AG04449 (cell line): ENCODE measurements at regions of chr15 and their contacts with region 1.

Region 1: DNA sequence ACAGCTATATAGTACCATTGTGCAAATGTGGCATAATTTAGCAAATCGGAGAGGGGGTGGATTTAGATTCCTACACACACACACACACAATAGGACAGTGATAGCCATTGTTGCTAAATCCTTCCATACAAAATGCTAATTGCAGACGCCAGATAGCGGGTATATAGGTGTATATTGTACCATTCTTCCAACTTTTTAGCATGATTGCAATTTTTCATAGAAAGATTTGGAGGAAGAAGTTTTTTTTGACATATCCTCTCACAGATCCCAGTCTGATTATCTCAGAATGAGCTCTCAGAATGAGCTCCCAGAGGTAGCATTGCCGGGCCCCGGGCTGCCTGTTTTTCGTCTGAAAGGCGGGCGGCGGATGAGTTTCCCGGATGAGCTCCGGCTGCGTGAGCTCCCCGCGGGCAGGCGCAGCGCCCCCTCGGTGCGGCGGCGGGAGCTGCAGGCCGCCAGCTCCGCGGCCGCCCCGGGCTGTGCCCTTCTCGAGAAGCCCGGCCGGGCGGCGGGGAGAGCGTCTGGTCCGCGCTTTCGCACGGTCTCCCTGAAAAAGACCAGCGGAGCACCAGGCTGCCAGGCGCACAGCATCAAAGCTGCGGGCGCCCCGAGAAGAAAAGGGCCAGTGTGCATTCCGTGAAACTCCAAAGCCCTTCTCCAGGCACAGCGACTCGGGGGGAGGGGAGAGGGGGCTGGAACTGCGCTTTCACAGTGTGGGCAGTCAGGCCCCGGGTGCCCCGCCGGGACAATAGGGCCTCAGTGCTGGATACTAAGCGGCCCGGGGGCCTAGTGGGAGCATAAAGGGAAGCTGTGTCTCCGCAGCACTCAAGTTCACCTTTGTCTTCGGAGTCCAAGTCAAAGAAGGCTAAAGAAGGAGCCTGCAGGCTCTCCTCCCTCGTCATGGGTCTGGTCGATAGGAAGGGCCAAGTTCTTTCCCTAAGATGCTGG is 12.0 kb upstream of the SHC4 start:
- DNase-seq: no peak
- H3K4me3 ChIP-seq: peak overlapping the region; percentile 57
- CTCF ChIP-seq: peak; percentile 78

Region 2: DNA sequence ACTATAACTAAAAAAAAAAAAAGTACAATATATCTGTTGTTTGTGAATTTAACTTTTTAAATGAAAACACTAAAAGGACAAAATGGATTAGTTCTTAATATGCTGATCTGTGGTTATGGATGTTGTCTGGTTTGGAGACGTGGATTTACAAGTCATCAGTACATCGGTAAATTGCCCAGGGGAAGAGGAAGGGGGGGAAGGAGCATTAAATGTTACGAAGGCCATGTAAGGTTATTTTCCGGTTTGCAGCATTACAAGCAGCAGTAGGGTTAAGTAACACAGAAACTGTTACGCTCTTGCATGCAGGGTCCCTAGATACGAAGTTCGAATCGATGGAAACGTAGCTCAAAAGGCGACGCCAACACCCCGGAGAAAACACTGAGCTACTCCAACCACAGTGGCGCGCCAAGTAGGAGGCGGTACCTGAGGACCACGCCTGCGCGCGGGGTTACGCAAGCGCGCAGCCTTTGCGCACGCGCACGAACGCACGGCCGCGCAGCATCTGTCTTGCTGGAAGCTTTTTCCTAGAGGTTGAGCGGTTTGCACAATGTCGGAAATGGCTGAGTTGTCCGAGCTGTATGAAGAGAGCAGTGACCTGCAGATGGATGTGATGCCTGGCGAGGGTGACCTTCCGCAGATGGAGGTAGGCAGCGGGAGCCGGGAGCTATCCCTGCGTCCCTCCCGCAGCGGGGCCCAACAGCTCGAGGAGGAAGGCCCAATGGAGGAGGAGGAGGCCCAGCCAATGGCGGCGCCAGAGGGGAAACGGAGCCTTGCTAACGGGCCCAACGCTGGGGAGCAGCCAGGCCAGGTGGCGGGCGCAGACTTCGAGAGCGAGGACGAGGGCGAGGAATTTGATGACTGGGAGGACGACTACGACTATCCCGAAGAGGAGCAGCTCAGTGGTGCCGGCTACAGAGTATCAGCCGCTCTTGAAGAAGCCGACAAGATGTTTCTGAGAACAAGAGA is 97.8 kb before region 1 on chr15 and contains the start of gene EID1:
- CTCF ChIA-PET with region 1: interaction called, 26 read pairs
- POLR2A ChIA-PET with region 1: interaction called, 5 read pairs
- DNase-seq: peak; percentile 68
- H3K4me3 ChIP-seq: peak within 1 kb of the TSS; percentile 87
- CTCF ChIP-seq: peak; percentile 24

Region 3: DNA sequence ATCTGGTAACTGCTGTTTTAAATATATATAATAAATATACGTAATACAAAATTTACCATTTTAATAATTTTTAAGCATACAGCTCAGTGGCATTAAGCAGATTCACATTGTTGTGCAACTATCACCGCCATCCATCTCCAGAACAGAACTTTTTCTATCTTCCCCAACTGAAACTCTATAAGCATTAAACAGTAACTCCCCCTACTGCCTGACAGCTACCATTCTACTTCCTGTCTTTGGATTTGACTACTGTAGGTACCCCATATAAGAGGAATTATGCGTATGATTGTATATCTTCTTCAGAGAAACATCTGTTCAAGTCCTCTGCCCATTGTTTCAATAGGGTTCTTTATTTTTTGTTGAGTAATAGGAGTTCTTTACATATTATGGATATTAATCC is 61.0 kb before region 1 on chr15:
- CTCF ChIA-PET with region 1: no interaction called
- POLR2A ChIA-PET with region 1: no interaction called
- DNase-seq: no peak
- H3K4me3 ChIP-seq: no peak overlapping the region
- CTCF ChIP-seq: no peak

Region 4: DNA sequence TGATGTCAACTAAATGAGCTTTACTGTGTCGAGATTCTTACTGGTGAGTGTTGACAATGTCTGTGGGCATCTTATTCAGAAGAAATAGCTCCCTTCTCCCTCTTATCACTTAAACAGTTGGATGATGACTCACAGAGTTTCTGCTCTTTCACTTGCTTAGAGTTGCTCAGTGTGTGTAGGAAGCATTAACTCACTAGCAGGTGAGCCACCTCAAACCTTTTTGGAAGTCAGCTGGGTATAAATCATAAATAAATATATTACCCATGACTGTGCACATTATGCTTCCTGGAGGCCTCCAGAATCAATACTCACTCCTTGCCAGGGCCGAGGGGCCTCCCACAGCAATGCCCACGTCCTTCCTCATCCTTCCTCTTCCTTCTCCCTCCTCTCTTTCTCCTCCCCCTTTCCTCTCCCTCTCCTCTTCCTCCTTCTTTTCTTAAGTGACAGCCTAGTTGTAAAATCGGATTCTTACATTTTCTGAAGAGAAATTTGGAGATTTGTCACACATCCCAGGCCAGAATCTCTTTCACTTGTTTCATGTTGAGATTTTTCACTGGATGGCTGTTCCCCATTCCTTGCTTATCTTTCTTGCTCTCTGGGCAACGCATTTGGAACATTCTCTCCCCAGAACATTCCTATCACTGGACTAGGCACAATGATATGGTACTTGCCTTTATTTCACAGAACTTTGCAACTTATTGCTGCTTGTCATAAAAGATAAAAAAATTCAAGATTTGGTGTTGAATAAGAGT is 29.5 kb before region 1 on chr15:
- CTCF ChIA-PET with region 1: interaction called, 13 read pairs
- POLR2A ChIA-PET with region 1: no interaction called
- DNase-seq: no peak
- H3K4me3 ChIP-seq: no peak overlapping the region
- CTCF ChIP-seq: no peak

Region 5: DNA sequence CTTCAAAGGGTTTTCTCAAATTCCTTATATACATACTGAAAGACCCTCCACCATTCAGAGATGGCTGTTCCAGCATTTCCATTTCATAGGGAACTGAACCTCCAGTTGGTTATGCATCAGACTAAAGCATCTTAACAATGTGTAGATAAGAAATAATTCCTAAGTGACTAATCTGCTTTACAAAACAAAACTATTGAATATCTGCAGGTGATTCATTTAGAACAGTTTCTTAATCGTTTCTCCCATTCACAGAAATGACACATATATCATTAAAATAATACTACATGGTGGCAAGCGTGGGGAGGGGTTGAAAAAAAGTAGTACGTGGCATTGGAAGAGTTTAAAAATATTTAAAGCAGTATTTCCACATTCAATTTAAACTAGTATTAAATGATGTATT is 160.1 kb after region 1 on chr15:
- CTCF ChIA-PET with region 1: interaction called, 15 read pairs
- POLR2A ChIA-PET with region 1: no interaction called
- DNase-seq: peak; percentile 42
- H3K4me3 ChIP-seq: no peak overlapping the region
- CTCF ChIP-seq: no peak

Region 6: DNA sequence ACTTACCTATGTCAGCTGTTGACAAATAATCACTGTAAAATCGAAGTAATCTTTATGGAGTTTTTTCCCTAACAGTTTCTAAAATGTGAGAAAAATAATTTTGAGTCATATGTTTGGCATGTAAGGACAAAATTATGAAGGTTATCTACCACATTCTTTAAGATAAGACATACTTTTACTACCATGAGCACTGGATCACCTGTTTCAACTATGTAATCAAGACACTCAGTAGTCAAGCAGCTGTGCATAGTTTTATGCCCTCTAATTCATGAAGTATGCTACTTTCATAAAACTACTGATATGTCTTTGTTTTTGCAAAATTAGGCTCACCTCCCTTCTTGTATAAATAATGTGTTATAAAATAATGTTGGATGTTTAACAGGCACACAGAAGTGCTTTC is 459.5 kb after region 1 on chr15:
- CTCF ChIA-PET with region 1: no interaction called
- POLR2A ChIA-PET with region 1: no interaction called
- DNase-seq: no peak
- H3K4me3 ChIP-seq: no peak overlapping the region
- CTCF ChIP-seq: no peak

Region 7: GRCh38 chr15:49731187-49732099 is 755.7 kb after region 1 on chr15:
- CTCF ChIA-PET with region 1: no interaction called
- POLR2A ChIA-PET with region 1: no interaction called
- DNase-seq: no peak
- H3K4me3 ChIP-seq: no peak overlapping the region
- CTCF ChIP-seq: no peak